ENCODE measurements at regions of chr4 and their contacts with region 1.

Region 1: GRCh38 chr4:143513306-143514168 is at the start of gene SMARCA5:
- DNase-seq: peak; percentile 95

Region 2: DNA sequence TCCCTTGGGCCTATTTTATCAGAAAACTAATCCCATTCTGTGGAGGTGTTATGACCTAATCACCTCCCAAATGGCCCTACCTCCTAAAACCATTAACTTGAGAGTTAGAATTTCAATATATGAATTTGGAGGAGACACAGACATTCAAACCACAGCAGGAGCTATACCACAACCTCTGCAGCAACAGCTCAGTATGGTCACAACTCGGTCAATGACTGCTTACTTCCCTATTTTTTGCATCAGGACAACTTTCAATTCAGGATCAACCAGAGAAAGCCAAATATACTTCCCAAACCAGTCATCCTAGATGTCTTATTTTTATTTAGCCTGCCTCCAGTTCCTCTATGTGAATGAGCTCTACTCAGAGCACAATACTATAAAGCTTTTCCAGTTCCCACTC is 11.3 kb before region 1 on chr4:
- CTCF ChIA-PET with region 1: no interaction called
- POLR2A ChIA-PET with region 1: interaction called, 12 read pairs
- DNase-seq: no peak

Measured in HEK293T (cell line).